GM13977 (cell line): ENCODE measurements at regions of chr1 and their contacts with region 1.

Region 1: GRCh38 chr1:197327776-197328364 is 59.8 kb downstream of the CRB1 start:
- DNase-seq: no peak
- CTCF ChIP-seq: peak; percentile 57

Region 2: DNA sequence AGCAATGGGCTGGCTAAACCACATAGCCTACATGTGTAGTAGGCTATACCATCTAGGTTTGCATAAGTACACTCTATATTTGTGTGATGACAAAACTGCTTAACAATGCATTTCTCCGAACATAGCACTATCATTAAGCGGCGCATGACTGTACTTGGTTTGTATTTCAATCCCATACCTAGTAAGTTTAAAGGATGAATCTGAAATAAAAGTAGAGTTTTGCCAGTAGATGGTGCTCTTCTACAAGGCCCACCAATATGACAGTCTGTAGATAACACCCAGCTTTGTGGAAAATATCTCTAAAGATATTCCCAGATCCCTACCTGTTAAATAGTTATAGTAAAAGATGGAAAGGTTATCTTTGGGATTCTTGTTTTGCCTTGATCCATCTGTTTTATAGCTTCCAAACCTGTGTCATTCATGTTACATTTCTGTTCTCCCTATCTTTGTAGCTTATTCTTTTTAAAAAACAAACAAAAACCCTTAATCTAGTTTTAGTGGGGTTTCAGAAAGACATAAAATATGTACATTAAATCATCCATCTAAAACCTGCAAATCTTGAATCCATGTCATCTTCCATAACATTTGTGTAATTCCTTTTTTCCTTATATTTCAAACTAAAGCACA is 147.5 kb before region 1 on chr1:
- in situ Hi-C with region 1: loop called (anchors 25 kb)
- DNase-seq: no peak
- CTCF ChIP-seq: peak; percentile 59